OCI-LY7 (cell line): ENCODE measurements at regions of chr1 and their contacts with region 1.

Region 1: DNA sequence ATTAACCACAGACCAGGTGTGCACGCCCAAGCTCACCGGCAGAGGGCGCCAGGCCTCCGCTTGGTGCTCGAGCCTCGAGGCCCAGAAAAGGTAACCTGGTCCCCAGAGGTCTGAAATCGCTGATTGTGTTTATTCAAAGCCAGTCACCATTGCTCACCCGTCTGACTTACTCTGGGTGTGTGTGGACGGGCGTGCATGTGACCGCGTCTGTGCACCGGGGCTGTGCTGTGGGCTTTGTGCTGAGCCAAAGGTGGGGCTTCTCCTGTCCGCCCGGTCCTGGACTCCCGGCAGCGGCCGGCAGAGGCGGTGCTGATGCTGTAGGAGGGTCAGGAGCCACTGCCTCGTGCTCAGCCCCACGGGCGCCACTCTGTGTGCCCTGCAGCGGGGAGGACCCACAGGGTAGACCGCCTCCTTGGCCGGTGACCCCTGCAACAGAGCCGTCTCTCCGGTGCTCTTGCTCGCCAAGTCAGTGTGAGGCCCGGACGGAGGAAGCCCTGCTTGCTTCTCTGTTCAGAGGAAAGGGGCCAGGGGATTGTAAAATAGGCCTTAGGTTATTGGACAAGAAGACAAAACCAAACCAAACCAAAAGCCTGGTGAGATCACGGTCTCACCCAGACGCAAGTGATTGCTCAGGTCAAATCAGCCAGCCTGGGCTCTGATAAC is 32.0 kb upstream of the BTG2 start:
- DNase-seq: peak; percentile 94
- H3K4me3 ChIP-seq: peak overlapping the region; percentile 66
- H3K27ac ChIP-seq: peak overlapping the region; percentile 88
- H3K4me1 ChIP-seq: peaks cover 98% of the 10 kb centered on the region
- CTCF ChIP-seq: peak; percentile 99

Region 2: DNA sequence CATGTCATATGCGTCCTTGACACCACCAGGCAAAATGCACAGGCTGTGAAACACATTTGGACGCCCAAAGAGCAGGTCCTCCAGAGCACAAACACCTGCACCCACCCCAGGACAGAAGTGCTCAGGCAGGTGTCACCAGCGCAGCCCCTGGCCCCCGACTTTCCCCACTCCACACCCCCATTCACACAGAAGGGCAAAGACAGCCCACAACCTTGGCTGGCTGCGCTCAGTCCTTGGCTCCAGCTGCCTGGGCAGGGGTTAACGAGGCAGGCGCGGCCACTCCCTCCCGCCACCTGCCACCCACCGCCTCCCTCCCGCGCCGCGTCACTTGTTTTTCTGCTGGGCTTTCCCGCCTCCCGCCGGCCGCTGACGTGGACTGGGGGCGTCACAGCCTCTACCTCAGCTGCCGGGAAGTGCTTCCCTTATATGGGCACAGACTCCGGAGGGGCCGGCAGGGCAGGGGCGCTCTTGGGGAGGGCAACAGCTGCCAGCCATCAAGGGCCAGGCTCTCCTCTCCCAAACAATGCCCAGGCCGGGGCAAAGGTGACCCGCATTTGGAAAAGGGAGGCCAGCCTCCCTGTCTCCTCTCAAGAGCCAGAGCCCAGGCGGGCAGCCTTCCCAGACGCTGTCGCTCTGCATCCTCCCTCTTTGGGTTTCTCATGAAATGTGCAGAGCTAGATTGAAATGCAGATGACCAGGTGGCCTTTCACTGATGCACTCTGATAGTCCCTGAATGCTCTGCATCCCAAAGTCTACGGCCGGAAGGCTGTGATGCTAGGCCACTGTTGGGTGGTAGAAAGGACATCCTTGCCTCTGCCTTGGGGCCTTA is 17.1 kb after region 1 on chr1:
- CTCF ChIA-PET with region 1: interaction called, 12 read pairs
- POLR2A ChIA-PET with region 1: interaction called, 5 read pairs
- intact Hi-C with region 1: loop called (anchors 1 kb)
- DNase-seq: peak; percentile 96
- H3K4me3 ChIP-seq: peak overlapping the region; percentile 63
- H3K27ac ChIP-seq: peak overlapping the region; percentile 99
- H3K4me1 ChIP-seq: peaks cover 99% of the 10 kb centered on the region
- CTCF ChIP-seq: 0 out of 2 replicates have a peak, but pooled peaks have one; percentile 17

Region 3: DNA sequence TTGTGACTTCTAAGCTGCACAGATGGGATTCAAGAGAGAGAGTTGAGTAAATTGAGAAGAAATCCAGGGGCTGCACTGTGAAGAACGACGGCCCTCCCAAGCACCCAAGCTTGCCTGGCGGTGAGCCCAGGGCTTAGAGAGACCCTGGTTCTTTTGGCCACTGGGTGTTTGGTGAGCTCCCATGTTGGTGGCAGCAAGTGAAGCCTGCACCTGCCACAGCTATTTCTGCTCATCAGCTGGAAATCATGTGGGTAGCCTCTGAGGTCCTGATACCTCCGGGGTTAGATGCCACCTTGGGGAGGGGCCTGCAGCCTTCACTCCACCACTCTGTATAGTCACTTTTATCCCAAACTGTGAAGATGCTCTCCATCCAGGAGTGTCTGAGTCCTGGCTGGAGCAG is 25.8 kb after region 1 on chr1:
- CTCF ChIA-PET with region 1: interaction called, 12 read pairs
- POLR2A ChIA-PET with region 1: interaction called, 5 read pairs
- intact Hi-C with region 1: loop called (anchors 1 kb)
- DNase-seq: peak; percentile 94
- H3K4me3 ChIP-seq: peak overlapping the region; percentile 59
- H3K27ac ChIP-seq: peak overlapping the region; percentile 98
- H3K4me1 ChIP-seq: peaks cover 100% of the 10 kb centered on the region
- CTCF ChIP-seq: peak; percentile 41; the same call in 1 of the 2 replicates

Region 4: GRCh38 chr1:203304919-203305808 is 31.8 kb after region 1 on chr1 and contains the start of gene BTG2:
- CTCF ChIA-PET with region 1: interaction called, 6 read pairs
- POLR2A ChIA-PET with region 1: interaction called, 77 read pairs
- intact Hi-C with region 1: loop called (anchors 1 kb)
- DNase-seq: peak; percentile 91
- H3K4me3 ChIP-seq: peak within 1 kb of the TSS; percentile 96
- H3K27ac ChIP-seq: peak within 1 kb of the TSS; percentile 98
- H3K4me1 ChIP-seq: peaks cover 66% of the 10 kb centered on the region
- CTCF ChIP-seq: no peak
- total RNA-seq, gene BTG2: 146 and 156 TPM in 2 replicates

Region 5: GRCh38 chr1:203326830-203327683 is 53.7 kb after region 1 on chr1:
- CTCF ChIA-PET with region 1: interaction called, 7 read pairs
- POLR2A ChIA-PET with region 1: interaction called, 458 read pairs
- intact Hi-C with region 1: loop called (anchors 1 kb)
- DNase-seq: peak; percentile 96
- H3K4me3 ChIP-seq: peak overlapping the region; percentile 67
- H3K27ac ChIP-seq: peak overlapping the region; percentile 98
- H3K4me1 ChIP-seq: peaks cover 90% of the 10 kb centered on the region
- CTCF ChIP-seq: no peak

Region 6: GRCh38 chr1:203486618-203487370 is 213.5 kb after region 1 on chr1:
- CTCF ChIA-PET with region 1: no interaction called
- POLR2A ChIA-PET with region 1: interaction called, 3 read pairs
- intact Hi-C with region 1: loop called (anchors 1 kb)
- DNase-seq: no peak
- H3K4me3 ChIP-seq: peak overlapping the region; percentile 65
- H3K27ac ChIP-seq: no peak overlapping the region
- H3K4me1 ChIP-seq: peaks cover 11% of the 10 kb centered on the region
- CTCF ChIP-seq: no peak

Region 7: GRCh38 chr1:203572134-203572625 is 298.8 kb after region 1 on chr1:
- CTCF ChIA-PET with region 1: no interaction called
- POLR2A ChIA-PET with region 1: no interaction called
- intact Hi-C with region 1: no loop called
- DNase-seq: no peak
- H3K4me3 ChIP-seq: no peak overlapping the region
- H3K27ac ChIP-seq: no peak overlapping the region
- H3K4me1 ChIP-seq: no peaks in the 10 kb centered on the region
- CTCF ChIP-seq: no peak